CD4-positive, alpha-beta memory T cell (primary cell): ENCODE measurements at regions of chr15 and their contacts with region 1.

Region 1: DNA sequence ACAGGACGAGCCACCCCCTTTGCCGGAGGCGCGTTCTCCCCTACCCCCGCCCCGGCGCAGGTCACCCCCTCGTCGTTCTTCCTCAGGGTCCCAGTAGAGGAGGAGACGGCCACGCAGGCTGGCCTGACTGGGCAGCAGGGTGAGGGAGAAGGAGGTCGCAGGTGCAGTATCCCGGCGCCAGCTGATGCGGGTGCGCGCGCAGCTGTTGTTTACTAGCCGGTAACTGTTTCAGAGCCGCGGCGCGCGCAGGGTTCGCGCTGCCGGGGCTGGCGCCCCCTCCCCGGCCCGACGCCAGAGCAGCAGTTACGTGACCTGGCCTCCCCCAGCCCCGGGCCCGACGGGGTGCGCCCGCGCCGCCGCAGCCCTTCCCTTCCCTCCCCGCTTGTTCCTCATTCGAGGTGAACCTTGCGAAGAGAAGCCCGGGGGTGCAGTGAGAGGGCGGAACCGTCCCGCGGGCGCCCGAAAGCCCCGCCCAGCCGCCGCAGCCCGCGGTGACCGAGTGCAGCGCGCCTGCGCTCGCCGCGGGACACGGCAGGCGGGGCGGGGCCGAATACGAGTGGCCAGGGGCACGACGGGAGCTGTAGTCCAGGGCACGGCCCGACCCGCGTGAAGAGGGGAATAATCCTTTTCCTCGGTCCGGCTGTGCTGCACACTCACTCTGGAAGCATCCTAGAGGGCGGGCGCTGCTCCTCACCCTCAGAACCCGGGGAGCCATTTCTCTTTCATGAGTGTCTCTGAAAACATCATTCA is at the start of gene SLC12A6:
- DNase-seq: peak; percentile 92 to 94 (median 92)
- H3K4me3 ChIP-seq: peak within 1 kb of the TSS; percentile 62 to 98
- H3K4me3 Mint-ChIP-seq: peak within 1 kb of the TSS; percentile 94 to 100 (median 100)
- H3K27ac ChIP-seq: peak within 1 kb of the TSS; percentile 76
- H3K27ac Mint-ChIP-seq: peak within 1 kb of the TSS; percentile 91 to 99 (median 97)
- H3K4me1 ChIP-seq: peaks cover 70% of the 10 kb centered on the region
- H3K4me1 Mint-ChIP-seq: peaks cover 38 to 71% (median 49%) of the 10 kb centered on the region in 4 donors
- H3K27me3 ChIP-seq: no peaks in the 10 kb centered on the region
- H3K27me3 Mint-ChIP-seq: no peaks in the 10 kb centered on the region
- total RNA-seq, gene SLC12A6: 71.3 to 72.0 TPM

Region 2: GRCh38 chr15:34101366-34102175 is 236.2 kb before region 1 on chr15 and contains the starts of genes EMC7 and PGBD4:
- CTCF ChIA-PET with region 1: interaction called, 7 read pairs
- POLR2A ChIA-PET with region 1: interaction called, 18 read pairs
- intact Hi-C with region 1: loop called (anchors 1 kb)
- DNase-seq: peak; percentile 99 to 100 (median 99)
- H3K4me3 ChIP-seq: peak within 1 kb of the TSS; percentile 94 to 97
- H3K4me3 Mint-ChIP-seq: peak within 1 kb of the TSS; percentile 92 to 100 (median 100)
- H3K27ac ChIP-seq: peak within 1 kb of the TSS; percentile 85
- H3K27ac Mint-ChIP-seq: peak within 1 kb of the TSS; percentile 94 to 100 (median 99)
- H3K4me1 ChIP-seq: peaks cover 37% of the 10 kb centered on the region
- H3K4me1 Mint-ChIP-seq: peaks cover 16 to 52% (median 36%) of the 10 kb centered on the region in 4 donors
- H3K27me3 ChIP-seq: no peaks in the 10 kb centered on the region
- H3K27me3 Mint-ChIP-seq: peaks cover 0 to 1% of the 10 kb centered on the region in 2 donors
- total RNA-seq, gene EMC7: 38.3 to 47.8 TPM
- total RNA-seq, gene PGBD4: 4.7 to 4.9 TPM

Region 3: DNA sequence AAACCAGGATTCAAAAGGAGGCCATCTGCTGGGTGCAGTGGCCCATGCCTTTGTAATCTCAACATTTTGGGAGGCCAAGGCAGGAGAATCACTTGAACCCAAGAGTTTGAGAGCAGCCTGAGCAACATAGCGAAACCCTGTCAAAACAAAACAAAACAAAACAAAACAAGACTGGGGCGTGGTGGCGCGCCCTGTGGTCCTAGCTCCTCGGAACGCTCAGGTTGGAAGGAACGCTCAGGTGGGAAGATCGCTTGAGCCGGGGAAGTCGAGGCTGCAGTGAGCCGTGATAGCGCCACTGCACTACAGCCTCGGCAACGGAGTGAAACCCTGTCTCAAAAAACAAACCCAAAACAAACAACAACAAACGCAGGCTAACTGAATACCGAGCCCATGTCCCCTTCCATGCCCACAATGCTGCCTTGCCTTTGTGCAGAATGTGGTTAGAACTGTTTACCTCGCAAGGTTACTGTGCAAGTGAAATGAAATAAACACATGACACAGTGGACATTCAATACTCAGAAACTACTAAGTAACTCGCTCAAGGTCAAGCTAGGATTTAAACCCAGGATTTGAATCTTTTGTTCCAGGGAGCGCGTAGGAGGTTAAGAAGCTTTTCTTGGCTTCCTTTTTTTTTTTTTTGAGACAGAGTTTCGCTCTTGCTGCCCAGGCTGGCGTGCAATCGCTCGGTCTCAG is 113.7 kb before region 1 on chr15:
- CTCF ChIA-PET with region 1: interaction called, 3 read pairs
- POLR2A ChIA-PET with region 1: interaction called, 25 read pairs
- intact Hi-C with region 1: no loop called
- DNase-seq: no peak
- H3K4me3 ChIP-seq: peak overlapping the region; percentile 88 to 93
- H3K4me3 Mint-ChIP-seq: peak overlapping the region; percentile 90 to 99 (median 96)
- H3K27ac ChIP-seq: peak overlapping the region; percentile 89
- H3K27ac Mint-ChIP-seq: peak overlapping the region; percentile 92 to 100 (median 99)
- H3K4me1 ChIP-seq: peaks cover 25% of the 10 kb centered on the region
- H3K4me1 Mint-ChIP-seq: peaks cover 21 to 32% (median 25%) of the 10 kb centered on the region in 4 donors
- H3K27me3 ChIP-seq: no peaks in the 10 kb centered on the region
- H3K27me3 Mint-ChIP-seq: peaks cover 3% of the 10 kb centered on the region in 2 donors

Region 4: GRCh38 chr15:34304613-34305012 is 33.1 kb before region 1 on chr15:
- CTCF ChIA-PET with region 1: no interaction called
- POLR2A ChIA-PET with region 1: interaction called, 5 read pairs
- intact Hi-C with region 1: loop called (anchors 5 kb)
- DNase-seq: no peak
- H3K4me3 ChIP-seq: no peak overlapping the region
- H3K4me3 Mint-ChIP-seq: no peak overlapping the region
- H3K27ac ChIP-seq: no peak overlapping the region
- H3K27ac Mint-ChIP-seq: peak overlapping the region in 2 of 7 donors; percentile 35 to 65
- H3K4me1 ChIP-seq: no peaks in the 10 kb centered on the region
- H3K4me1 Mint-ChIP-seq: peaks cover 17 to 41% (median 33%) of the 10 kb centered on the region in 4 donors
- H3K27me3 ChIP-seq: no peaks in the 10 kb centered on the region
- H3K27me3 Mint-ChIP-seq: no peaks in the 10 kb centered on the region

Region 5: GRCh38 chr15:34324933-34325332 is 12.8 kb before region 1 on chr15:
- CTCF ChIA-PET with region 1: interaction called, 27 read pairs
- POLR2A ChIA-PET with region 1: interaction called, 52 read pairs
- intact Hi-C with region 1: no loop called
- DNase-seq: no peak
- H3K4me3 ChIP-seq: no peak overlapping the region
- H3K4me3 Mint-ChIP-seq: no peak overlapping the region
- H3K27ac ChIP-seq: no peak overlapping the region
- H3K27ac Mint-ChIP-seq: peak overlapping the region in 1 of 7 donors; percentile 35
- H3K4me1 ChIP-seq: peaks cover 44% of the 10 kb centered on the region
- H3K4me1 Mint-ChIP-seq: peaks cover 24 to 48% (median 40%) of the 10 kb centered on the region in 4 donors
- H3K27me3 ChIP-seq: no peaks in the 10 kb centered on the region
- H3K27me3 Mint-ChIP-seq: no peaks in the 10 kb centered on the region

Region 6: DNA sequence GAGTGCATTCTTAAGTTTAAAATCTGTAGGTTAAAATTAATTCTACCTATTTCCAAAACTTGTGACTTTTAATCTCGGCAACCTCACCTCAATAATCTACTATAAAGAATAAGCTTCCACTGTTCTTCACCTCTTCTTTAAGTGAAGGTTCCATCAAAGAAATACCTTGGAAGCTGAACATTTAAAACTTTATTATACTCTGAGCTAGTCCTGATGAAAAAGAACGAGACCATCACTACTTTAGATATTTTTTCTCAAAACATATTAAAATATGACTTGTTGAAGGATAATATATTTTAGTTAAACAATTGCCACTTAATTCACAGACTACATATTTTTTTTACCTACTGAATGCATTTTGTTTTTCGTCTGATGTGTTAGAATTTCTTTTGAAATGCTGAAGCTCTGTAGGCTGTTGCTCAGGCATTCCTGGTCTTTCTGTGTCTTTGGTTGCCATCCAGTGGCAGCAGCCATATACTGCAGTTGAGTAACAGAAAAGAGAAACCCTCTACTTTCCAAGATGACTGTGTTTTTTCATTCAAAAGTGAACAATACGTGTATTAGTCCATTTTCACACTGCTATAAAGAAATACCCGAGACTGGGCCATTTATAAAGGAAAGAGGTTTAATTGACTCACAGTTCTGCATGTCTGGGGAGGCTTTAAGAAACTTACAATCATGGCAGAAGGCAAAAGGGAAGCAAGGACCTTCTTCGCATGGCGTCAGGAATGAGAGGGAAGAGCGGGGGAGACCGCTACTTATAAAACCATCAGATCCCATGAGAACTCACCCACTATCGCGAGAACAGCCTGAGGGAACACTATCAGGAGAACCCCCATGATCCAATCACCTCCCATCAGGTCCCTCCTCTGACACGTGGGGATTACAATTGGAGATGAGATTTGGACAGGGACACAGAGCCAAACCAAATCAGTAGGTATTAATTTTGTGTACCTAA is 250.3 kb after region 1 on chr15:
- CTCF ChIA-PET with region 1: interaction called, 17 read pairs
- POLR2A ChIA-PET with region 1: interaction called, 24 read pairs
- intact Hi-C with region 1: no loop called
- DNase-seq: peak; percentile 67 to 72 (median 68)
- H3K4me3 ChIP-seq: no peak overlapping the region
- H3K4me3 Mint-ChIP-seq: peak overlapping the region; percentile 42 to 82 (median 71)
- H3K27ac ChIP-seq: no peak overlapping the region
- H3K27ac Mint-ChIP-seq: peak overlapping the region in 4 of 7 donors; percentile 1 to 82 (median 64)
- H3K4me1 ChIP-seq: peaks cover 11% of the 10 kb centered on the region
- H3K4me1 Mint-ChIP-seq: peaks cover 4 to 6% (median 5%) of the 10 kb centered on the region in 4 donors
- H3K27me3 ChIP-seq: no peaks in the 10 kb centered on the region
- H3K27me3 Mint-ChIP-seq: peaks cover 0 to 5% of the 10 kb centered on the region in 2 donors